Mammary epithelial cell (primary cell): ENCODE measurements at regions of chr6 and their contacts with region 1.

Region 1: DNA sequence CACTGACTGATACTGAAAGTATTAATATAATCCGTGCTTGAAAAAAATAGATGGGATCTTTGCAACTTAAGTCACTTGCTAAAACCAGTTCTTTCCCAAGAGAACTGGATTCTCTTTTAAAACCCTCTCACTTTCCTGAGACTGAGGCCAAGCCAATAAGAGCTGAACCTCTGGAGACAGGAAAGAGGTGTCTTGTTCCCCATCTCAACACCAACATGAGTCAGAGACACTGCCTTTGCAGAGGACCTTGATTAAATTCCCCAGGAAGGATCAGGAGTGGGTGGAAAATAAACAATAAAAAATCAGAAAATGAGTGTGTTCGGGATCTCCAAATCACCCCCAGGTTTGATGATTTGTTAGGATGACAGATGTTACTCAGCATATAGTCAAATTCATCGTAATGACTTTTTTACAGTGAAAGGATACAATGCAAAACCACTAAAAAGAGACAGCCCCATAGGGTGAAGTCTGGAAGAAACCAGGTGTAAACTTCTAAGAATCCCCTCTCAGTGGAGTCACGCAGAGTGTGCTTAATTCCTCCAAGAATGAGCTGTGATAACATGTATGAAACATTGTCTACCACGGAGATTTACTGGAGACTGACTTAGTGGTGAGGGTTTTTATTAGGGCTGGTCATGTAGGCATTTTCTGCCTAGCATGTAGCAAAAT is 122.8 kb upstream of the BEND3 start:
- DNase-seq: peak; percentile 83
- H3K4me3 ChIP-seq: no peak overlapping the region
- H3K27ac ChIP-seq: peak overlapping the region; percentile 38
- H3K4me1 ChIP-seq: peaks cover 38% of the 10 kb centered on the region
- H3K27me3 ChIP-seq: no peaks in the 10 kb centered on the region
- CTCF ChIP-seq: no peak

Region 2: DNA sequence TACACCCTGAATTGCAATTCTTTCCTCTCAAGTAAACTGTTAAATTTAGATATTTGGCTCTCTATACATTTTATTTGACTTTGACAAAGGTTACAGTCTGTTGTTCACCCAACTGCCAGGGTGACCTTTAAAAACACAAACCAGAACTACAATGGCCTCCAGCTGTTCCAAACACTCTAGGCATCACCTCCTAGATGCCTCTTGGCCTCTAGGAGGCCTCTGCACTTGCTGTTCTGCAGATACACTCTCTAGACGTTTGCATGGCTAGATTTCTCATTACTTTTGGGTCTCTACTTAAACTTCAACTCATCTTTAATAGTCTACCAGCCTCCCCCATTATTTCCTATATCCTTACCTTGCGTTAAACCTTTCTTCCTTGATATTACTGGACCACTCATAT is 20.0 kb before region 1 on chr6:
- CTCF ChIA-PET with region 1: interaction called, 10 read pairs
- dilution Hi-C with region 1: no loop called
- in situ Hi-C with region 1: no loop called
- intact Hi-C with region 1: no loop called
- DNase-seq: no peak
- H3K4me3 ChIP-seq: no peak overlapping the region
- H3K27ac ChIP-seq: no peak overlapping the region
- H3K4me1 ChIP-seq: no peaks in the 10 kb centered on the region
- H3K27me3 ChIP-seq: no peaks in the 10 kb centered on the region
- CTCF ChIP-seq: no peak

Region 3: GRCh38 chr6:107280791-107281190 is 42.7 kb after region 1 on chr6:
- CTCF ChIA-PET with region 1: no interaction called
- dilution Hi-C with region 1: no loop called
- in situ Hi-C with region 1: no loop called
- intact Hi-C with region 1: loop called (anchors 1 kb)
- DNase-seq: no peak
- H3K4me3 ChIP-seq: no peak overlapping the region
- H3K27ac ChIP-seq: no peak overlapping the region
- H3K4me1 ChIP-seq: no peaks in the 10 kb centered on the region
- H3K27me3 ChIP-seq: no peaks in the 10 kb centered on the region
- CTCF ChIP-seq: no peak

Region 4: GRCh38 chr6:107342144-107342543 is 104.0 kb after region 1 on chr6:
- CTCF ChIA-PET with region 1: no interaction called
- dilution Hi-C with region 1: no loop called
- in situ Hi-C with region 1: no loop called
- intact Hi-C with region 1: no loop called
- DNase-seq: no peak
- H3K4me3 ChIP-seq: no peak overlapping the region
- H3K27ac ChIP-seq: no peak overlapping the region
- H3K4me1 ChIP-seq: peaks cover 2% of the 10 kb centered on the region
- H3K27me3 ChIP-seq: no peaks in the 10 kb centered on the region
- CTCF ChIP-seq: no peak